ENCODE measurements at regions of chr3 and their contacts with region 1.

Region 1: DNA sequence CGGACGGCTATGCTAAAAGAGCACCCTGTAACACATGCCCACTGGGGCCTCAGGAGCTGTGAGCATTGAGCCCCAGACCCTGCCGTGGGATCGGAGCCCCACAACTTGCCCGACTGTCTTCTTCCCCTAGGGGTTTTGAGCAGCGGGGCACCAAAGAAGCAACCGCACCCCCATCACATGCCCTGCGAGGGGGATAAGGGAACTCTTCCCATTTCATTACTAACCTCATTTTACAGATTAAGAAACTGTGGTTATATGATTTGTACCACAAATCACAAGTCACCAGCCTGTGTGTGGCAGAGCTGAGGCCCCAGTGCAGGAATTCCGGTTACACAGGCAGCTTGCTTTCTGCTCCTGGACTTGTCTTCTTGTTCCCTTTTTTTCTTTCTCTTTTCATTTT is 86.2 kb downstream of the CD47 start:
- DNase-seq: peak; percentile 54
- ATAC-seq: no peak
- H3K4me3 ChIP-seq: peak overlapping the region in 4 of 5 experiments; percentile 6 to 49 (median 40)
- H3K4me3 Mint-ChIP-seq: peak overlapping the region; percentile 69
- H3K27ac ChIP-seq: no peak overlapping the region
- H3K27ac Mint-ChIP-seq: no peak overlapping the region
- H3K4me1 ChIP-seq: peaks cover 24 to 25% of the 10 kb centered on the region in 2 donors
- H3K4me1 Mint-ChIP-seq: peaks cover 28% of the 10 kb centered on the region
- H3K27me3 ChIP-seq: peaks cover 0 to 3% (median 0%) of the 10 kb centered on the region in 4 experiments
- H3K27me3 Mint-ChIP-seq: peaks cover 10% of the 10 kb centered on the region
- CTCF ChIP-seq: no peak

Region 2: GRCh38 chr3:107660306-107660976 is 344.2 kb before region 1 on chr3:
- CTCF ChIA-PET with region 1: no interaction called
- POLR2A ChIA-PET with region 1: interaction called, 11 read pairs
- intact Hi-C with region 1: no loop called
- DNase-seq: peak; percentile 51
- ATAC-seq: no peak
- H3K4me3 ChIP-seq: no peak overlapping the region
- H3K4me3 Mint-ChIP-seq: no peak overlapping the region
- H3K27ac ChIP-seq: no peak overlapping the region
- H3K27ac Mint-ChIP-seq: no peak overlapping the region
- H3K4me1 ChIP-seq: peaks cover 8% of the 10 kb centered on the region in 2 donors
- H3K4me1 Mint-ChIP-seq: peaks cover 25% of the 10 kb centered on the region
- H3K27me3 ChIP-seq: no peaks in the 10 kb centered on the region
- H3K27me3 Mint-ChIP-seq: no peaks in the 10 kb centered on the region
- CTCF ChIP-seq: peak; percentile 83